OCI-LY7 (cell line): ENCODE measurements at regions of chr10 and their contacts with region 1.

Region 1: GRCh38 chr10:50658165-50658564 is 34.4 kb upstream of the SGMS1 start:
- DNase-seq: no peak
- H3K4me3 ChIP-seq: peak overlapping the region; percentile 72
- H3K27ac ChIP-seq: peak overlapping the region; percentile 40
- H3K4me1 ChIP-seq: peaks cover 35% of the 10 kb centered on the region
- CTCF ChIP-seq: no peak

Region 2: GRCh38 chr10:50540069-50540825 is 117.9 kb before region 1 on chr10:
- CTCF ChIA-PET with region 1: no interaction called
- POLR2A ChIA-PET with region 1: no interaction called
- intact Hi-C with region 1: no loop called
- DNase-seq: no peak
- H3K4me3 ChIP-seq: no peak overlapping the region
- H3K27ac ChIP-seq: no peak overlapping the region
- H3K4me1 ChIP-seq: no peaks in the 10 kb centered on the region
- CTCF ChIP-seq: no peak

Region 3: DNA sequence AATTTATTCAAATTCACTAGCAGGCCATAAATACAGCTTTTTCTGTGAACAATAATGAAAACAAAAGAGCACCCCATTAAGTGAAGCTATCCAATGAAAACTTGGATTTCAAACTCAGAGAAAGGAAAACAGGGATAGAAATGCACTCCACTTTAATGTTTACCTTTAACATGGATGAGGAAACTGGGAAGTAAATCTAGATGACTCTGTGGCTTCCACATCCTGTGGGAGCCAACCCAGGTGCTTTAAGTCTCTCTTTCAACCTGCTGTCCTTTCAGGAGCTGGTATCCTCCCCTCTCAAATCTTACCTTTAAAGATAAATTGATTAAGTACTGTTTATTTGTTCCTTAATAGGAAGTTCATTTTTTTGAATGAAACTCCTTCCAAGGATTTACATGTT is 12.9 kb before region 1 on chr10:
- CTCF ChIA-PET with region 1: interaction called, 6 read pairs
- POLR2A ChIA-PET with region 1: interaction called, 57 read pairs
- intact Hi-C with region 1: no loop called
- DNase-seq: no peak
- H3K4me3 ChIP-seq: peak overlapping the region; percentile 12
- H3K27ac ChIP-seq: peak overlapping the region; percentile 96
- H3K4me1 ChIP-seq: peaks cover 82% of the 10 kb centered on the region
- CTCF ChIP-seq: no peak